HCT116 (cell line): ENCODE measurements at regions of chr19 and their contacts with region 1.

Region 1: GRCh38 chr19:6481541-6482342 is at the start of gene DENND1C:
- DNase-seq: no peak
- ATAC-seq: peak; percentile 88
- H3K4me3 ChIP-seq: no peak within 1 kb of the TSS
- H3K27ac ChIP-seq: no peak within 1 kb of the TSS; the same call in 1 of the 2 replicates
- H3K4me1 ChIP-seq: peaks cover 0 to 8% of the 10 kb centered on the region in 2 experiments; a peak in 1 of 4 replicates
- H3K27me3 ChIP-seq: no peaks in the 10 kb centered on the region
- CTCF ChIP-seq: peak; percentile 65 to 90 (median 79); a peak in 5 of 6 replicates
- POLR2A ChIP-seq: no peak
- RAD21 ChIP-seq: peak; percentile 78
- total RNA-seq, gene DENND1C: 0.54 TPM

Region 2: GRCh38 chr19:6577476-6578125 is 95.9 kb after region 1 on chr19:
- CTCF ChIA-PET with region 1: no interaction called
- POLR2A ChIA-PET with region 1: no interaction called
- RAD21 ChIA-PET with region 1: no interaction called
- intact Hi-C with region 1: no loop called
- DNase-seq: no peak
- ATAC-seq: peak; percentile 46; the same call in 1 of the 2 replicates
- H3K4me3 ChIP-seq: no peak overlapping the region
- H3K27ac ChIP-seq: peak overlapping the region; percentile 75
- H3K4me1 ChIP-seq: peaks cover 39 to 47% of the 10 kb centered on the region in 2 experiments
- H3K27me3 ChIP-seq: no peaks in the 10 kb centered on the region
- CTCF ChIP-seq: no peak
- POLR2A ChIP-seq: no peak
- RAD21 ChIP-seq: no peak

Region 3: GRCh38 chr19:6632002-6632621 is 150.4 kb after region 1 on chr19:
- CTCF ChIA-PET with region 1: no interaction called
- POLR2A ChIA-PET with region 1: no interaction called
- RAD21 ChIA-PET with region 1: no interaction called
- intact Hi-C with region 1: loop called (anchors 1 kb)
- DNase-seq: peak; percentile 77
- ATAC-seq: peak; percentile 71
- H3K4me3 ChIP-seq: no peak overlapping the region
- H3K27ac ChIP-seq: no peak overlapping the region
- H3K4me1 ChIP-seq: peaks cover 3 to 14% of the 10 kb centered on the region in 2 experiments; a peak in 3 of 4 replicates
- H3K27me3 ChIP-seq: no peaks in the 10 kb centered on the region
- CTCF ChIP-seq: peak; percentile 70 to 83 (median 76)
- POLR2A ChIP-seq: no peak
- RAD21 ChIP-seq: peak; percentile 80